Activated CD4-positive, alpha-beta T cell treated with anti-CD3 and anti-CD28 coated beads for 36 hours (primary cell): ENCODE measurements at regions of chr2 and their contacts with region 1.

Region 1: DNA sequence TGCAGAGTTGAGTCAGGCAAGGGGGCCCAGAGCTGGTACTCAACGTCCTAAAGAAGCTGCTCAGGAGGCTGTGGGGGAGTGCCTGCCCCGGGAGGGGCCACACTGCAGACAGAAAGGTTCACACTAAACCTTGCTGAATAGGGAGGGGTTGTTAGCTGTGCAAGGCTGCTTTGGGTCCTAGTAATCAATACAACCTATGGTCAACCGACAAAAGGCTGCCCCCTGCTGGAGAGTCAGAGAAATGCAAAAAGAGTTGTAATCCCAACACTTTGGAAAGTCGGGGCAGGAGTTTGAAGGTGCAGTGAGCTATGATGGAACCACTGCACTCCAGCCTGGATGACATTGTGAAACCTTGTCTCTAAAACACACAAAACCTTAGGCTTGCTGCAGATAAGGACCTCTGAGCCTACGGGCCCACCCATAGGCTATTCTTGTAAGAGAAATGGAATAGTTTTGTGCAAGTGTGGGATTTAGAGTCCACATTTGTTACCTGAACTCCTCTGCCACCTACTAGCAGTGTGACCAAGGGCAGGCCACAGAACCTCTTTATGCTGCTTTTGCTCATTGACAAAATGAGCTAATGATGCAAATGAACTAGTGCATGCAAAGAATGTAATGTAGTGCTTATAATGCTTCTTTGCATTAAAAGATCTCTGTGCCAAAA is 81.5 kb downstream of the PRPF40A start:
- DNase-seq: peak; percentile 81
- ATAC-seq: peak; percentile 65
- H3K4me3 Mint-ChIP-seq: no peak overlapping the region
- H3K27ac Mint-ChIP-seq: no peak overlapping the region
- H3K4me1 Mint-ChIP-seq: no peaks in the 10 kb centered on the region
- H3K27me3 Mint-ChIP-seq: peaks cover 2% of the 10 kb centered on the region

Region 2: DNA sequence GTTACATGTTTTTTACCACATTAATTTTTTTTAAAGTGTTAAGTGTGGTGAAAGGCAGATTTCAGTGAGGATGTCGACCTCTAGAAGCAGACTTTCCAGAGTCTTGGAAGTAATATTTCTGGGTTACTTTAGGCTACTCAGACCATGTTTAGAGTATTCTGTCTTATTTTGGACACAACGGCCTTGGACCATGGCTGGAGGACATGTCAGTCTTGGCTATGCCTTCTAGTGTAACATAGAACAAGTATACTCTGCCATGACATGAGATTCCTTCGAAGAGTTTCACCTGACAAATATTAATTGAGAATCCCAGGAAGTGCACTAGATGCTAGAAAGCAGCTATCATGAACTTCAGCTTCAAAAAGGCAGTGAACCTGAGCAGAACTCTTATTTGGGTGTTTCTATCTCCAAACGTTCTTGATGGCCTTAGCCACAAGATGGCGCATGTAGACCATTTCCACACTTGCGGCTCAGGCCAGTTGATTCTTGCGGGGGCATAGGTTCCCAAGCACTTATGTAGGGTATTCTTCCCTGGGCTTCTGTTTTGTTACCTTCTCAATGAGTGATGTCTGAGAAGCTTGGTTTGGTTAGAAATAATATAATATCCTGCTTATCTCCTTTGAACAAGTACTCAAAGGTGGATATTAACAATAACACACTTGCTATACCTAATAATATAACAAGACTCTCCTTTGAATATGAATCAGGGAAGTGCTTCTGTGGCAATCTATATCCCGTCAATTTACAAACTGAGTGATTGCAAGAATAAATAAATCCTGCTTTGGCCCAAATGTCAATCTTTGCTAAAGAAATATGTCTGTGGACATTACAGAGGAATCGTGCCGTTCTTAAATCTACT is 598.9 kb before region 1 on chr2:
- CTCF ChIA-PET with region 1: interaction called, 18 read pairs
- POLR2A ChIA-PET with region 1: no interaction called
- intact Hi-C with region 1: loop called (anchors 1 kb)
- DNase-seq: peak; percentile 77
- ATAC-seq: peak; percentile 42
- H3K4me3 Mint-ChIP-seq: no peak overlapping the region
- H3K27ac Mint-ChIP-seq: no peak overlapping the region
- H3K4me1 Mint-ChIP-seq: no peaks in the 10 kb centered on the region
- H3K27me3 Mint-ChIP-seq: peaks cover 2% of the 10 kb centered on the region

Region 3: GRCh38 chr2:152189622-152190495 is 445.9 kb before region 1 on chr2:
- CTCF ChIA-PET with region 1: interaction called, 10 read pairs
- POLR2A ChIA-PET with region 1: no interaction called
- intact Hi-C with region 1: loop called (anchors 1 kb)
- DNase-seq: peak; percentile 44
- ATAC-seq: peak; percentile 74
- H3K4me3 Mint-ChIP-seq: no peak overlapping the region
- H3K27ac Mint-ChIP-seq: no peak overlapping the region
- H3K4me1 Mint-ChIP-seq: peaks cover 7% of the 10 kb centered on the region
- H3K27me3 Mint-ChIP-seq: peaks cover 23% of the 10 kb centered on the region

Region 4: GRCh38 chr2:152335010-152335725 is 300.6 kb before region 1 on chr2 and contains the start of gene FMNL2:
- CTCF ChIA-PET with region 1: interaction called, 3 read pairs
- POLR2A ChIA-PET with region 1: no interaction called
- intact Hi-C with region 1: loop called (anchors 5 kb)
- DNase-seq: peak; percentile 80
- ATAC-seq: peak; percentile 83
- H3K4me3 Mint-ChIP-seq: peak within 1 kb of the TSS; percentile 73
- H3K27ac Mint-ChIP-seq: no peak within 1 kb of the TSS
- H3K4me1 Mint-ChIP-seq: peaks cover 11% of the 10 kb centered on the region
- H3K27me3 Mint-ChIP-seq: peaks cover 44% of the 10 kb centered on the region
- total RNA-seq, gene FMNL2: 3.0 to 3.3 TPM

Region 5: GRCh38 chr2:152620208-152620607 is 15.6 kb before region 1 on chr2:
- CTCF ChIA-PET with region 1: interaction called, 16 read pairs
- POLR2A ChIA-PET with region 1: no interaction called
- intact Hi-C with region 1: no loop called
- DNase-seq: no peak
- ATAC-seq: no peak
- H3K4me3 Mint-ChIP-seq: no peak overlapping the region
- H3K27ac Mint-ChIP-seq: no peak overlapping the region
- H3K4me1 Mint-ChIP-seq: no peaks in the 10 kb centered on the region
- H3K27me3 Mint-ChIP-seq: peaks cover 2% of the 10 kb centered on the region

Region 6: DNA sequence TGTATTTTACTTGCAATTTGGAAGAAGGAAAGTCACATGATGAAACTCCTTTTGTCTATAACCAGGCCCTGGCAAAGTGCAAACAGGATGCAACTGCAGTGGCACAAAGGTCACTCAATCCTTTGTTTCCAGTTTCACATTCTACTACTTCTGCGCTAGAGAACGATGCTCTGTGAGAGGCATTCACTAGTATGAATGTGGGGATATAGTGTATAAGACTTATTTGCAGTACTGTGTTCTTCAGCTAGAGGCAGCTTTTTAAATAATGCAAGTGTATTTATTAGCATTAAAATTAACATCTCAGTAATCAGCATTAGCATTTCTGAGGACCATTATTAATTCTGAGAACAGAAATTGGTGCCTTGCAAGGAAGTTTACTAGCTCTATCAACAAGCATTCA is 12.6 kb after region 1 on chr2:
- CTCF ChIA-PET with region 1: interaction called, 17 read pairs
- POLR2A ChIA-PET with region 1: no interaction called
- intact Hi-C with region 1: no loop called
- DNase-seq: no peak
- ATAC-seq: peak; percentile 30
- H3K4me3 Mint-ChIP-seq: no peak overlapping the region
- H3K27ac Mint-ChIP-seq: no peak overlapping the region
- H3K4me1 Mint-ChIP-seq: no peaks in the 10 kb centered on the region
- H3K27me3 Mint-ChIP-seq: no peaks in the 10 kb centered on the region

Region 7: GRCh38 chr2:152962446-152962845 is 326.7 kb after region 1 on chr2:
- CTCF ChIA-PET with region 1: no interaction called
- POLR2A ChIA-PET with region 1: no interaction called
- intact Hi-C with region 1: no loop called
- DNase-seq: no peak
- ATAC-seq: no peak
- H3K4me3 Mint-ChIP-seq: no peak overlapping the region
- H3K27ac Mint-ChIP-seq: no peak overlapping the region
- H3K4me1 Mint-ChIP-seq: no peaks in the 10 kb centered on the region
- H3K27me3 Mint-ChIP-seq: no peaks in the 10 kb centered on the region

Region 8: DNA sequence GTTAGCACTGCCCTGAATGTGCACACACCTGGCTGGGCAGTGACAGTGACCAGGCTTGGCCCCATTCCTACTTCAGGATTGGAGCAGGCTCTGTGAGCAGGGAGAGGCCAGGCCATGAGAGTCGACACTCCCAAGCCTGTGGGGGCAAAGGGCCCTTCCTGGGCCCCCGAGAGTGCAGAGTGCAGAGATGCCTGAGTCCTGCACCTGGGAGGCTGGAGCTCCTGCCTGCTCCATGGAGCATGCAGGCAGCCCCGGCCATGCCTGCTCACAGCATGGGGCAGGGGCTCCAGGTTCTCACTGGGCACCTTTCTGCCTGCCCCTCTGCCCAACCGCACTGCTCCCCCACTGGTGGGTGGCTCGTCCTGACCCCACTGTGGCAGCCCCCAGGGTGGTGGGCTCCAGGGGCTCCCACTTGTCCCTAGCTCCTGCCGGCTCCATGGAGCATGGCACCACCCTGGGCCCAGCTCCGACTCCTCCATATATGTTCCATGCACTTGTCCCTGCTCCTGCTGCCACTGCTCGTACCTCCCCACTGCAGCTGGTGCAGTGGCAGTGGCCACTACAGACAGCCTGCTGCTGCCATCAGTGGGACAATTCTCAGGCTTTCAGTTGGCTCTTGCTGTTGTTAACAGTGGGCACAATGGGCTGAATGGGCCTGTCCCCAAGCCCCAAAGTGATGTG is 560.8 kb after region 1 on chr2:
- CTCF ChIA-PET with region 1: no interaction called
- POLR2A ChIA-PET with region 1: no interaction called
- intact Hi-C with region 1: no loop called
- DNase-seq: no peak
- ATAC-seq: no peak
- H3K4me3 Mint-ChIP-seq: no peak overlapping the region
- H3K27ac Mint-ChIP-seq: no peak overlapping the region
- H3K4me1 Mint-ChIP-seq: no peaks in the 10 kb centered on the region
- H3K27me3 Mint-ChIP-seq: no peaks in the 10 kb centered on the region